Sigmoid colon (tissue), 7 donors: ENCODE measurements at regions of chr9 and their contacts with region 1.

Region 1: DNA sequence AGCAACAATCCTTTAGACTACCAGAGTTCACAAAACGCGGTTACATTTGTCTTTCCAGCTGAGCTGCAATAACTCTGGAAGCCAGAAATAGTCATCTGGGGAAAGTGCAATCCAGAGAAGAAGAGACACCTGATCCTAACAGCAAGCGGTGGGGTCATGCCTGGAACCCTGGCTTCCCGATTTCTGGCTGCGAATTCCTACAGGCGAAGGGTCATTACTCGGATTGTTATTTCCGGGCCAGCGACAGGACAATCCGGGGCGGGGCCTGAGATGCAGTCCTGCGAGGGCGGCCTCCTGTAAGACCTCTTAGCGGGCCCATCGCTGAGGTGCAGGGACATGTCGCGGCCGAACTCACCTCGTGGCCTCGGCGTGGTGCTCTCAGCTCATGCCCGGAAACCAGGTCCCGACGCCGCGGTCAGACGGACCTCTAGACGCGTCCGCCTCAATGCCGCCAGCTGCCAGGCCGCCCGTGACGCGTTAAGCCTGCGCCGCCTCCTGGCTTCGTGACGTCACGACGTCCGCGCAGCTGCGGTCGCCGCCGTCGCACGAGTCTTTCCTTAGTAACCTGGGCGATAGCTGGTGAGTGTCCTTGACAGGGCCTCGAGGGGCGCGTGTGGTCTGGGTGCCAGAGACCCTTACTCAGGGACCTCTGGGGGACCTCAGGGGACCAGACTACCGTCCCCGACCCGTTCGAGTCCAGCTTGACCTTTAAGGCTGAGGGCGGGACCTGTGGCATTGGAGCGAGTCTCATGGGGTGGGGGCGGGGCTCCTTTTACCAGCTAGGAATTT is at the starts of genes MRRF and RBM18:
- DNase-seq: peak; percentile 95
- H3K4me3 ChIP-seq: peak within 1 kb of the TSS; percentile 56 to 84 (median 70)
- H3K27ac ChIP-seq: peak within 1 kb of the TSS; percentile 86 to 93 (median 92)
- H3K4me1 ChIP-seq: peaks cover 0 to 42% (median 39%) of the 10 kb centered on the region in 4 donors
- H3K27me3 ChIP-seq: no peaks in the 10 kb centered on the region
- CTCF ChIP-seq: no peak
- EP300 ChIP-seq: peak in 1 of 4 donors; percentile 16
- POLR2A ChIP-seq: peak in 1 of 2 donors; percentile 63
- total RNA-seq, gene MRRF: 29.9 to 40.7 (median 33.9) TPM
- total RNA-seq, gene RBM18: 11.9 to 16.8 (median 13.0) TPM

Region 2: GRCh38 chr9:122159026-122159924 is 105.3 kb before region 1 on chr9 and contains the starts of genes MORN5 and NDUFA8:
- intact Hi-C with region 1: loop called (anchors 2 kb)
- DNase-seq: peak; percentile 98
- H3K4me3 ChIP-seq: peak within 1 kb of the TSS; percentile 87 to 98 (median 92)
- H3K27ac ChIP-seq: peak within 1 kb of the TSS; percentile 89 to 94 (median 92)
- H3K4me1 ChIP-seq: peaks cover 0 to 62% (median 49%) of the 10 kb centered on the region in 4 donors
- H3K27me3 ChIP-seq: no peaks in the 10 kb centered on the region
- CTCF ChIP-seq: peak; percentile 12 to 29 (median 24)
- EP300 ChIP-seq: no peak
- POLR2A ChIP-seq: peak; percentile 87 to 88
- total RNA-seq, gene MORN5: 26.5 to 45.7 (median 34.2) TPM
- total RNA-seq, gene NDUFA8: 63.9 to 106 (median 88.8) TPM

Region 3: GRCh38 chr9:122213589-122214413 is 50.8 kb before region 1 on chr9:
- intact Hi-C with region 1: no loop called
- DNase-seq: peak; percentile 47
- H3K4me3 ChIP-seq: peak overlapping the region in 3 of 4 donors; percentile 31 to 39 (median 36)
- H3K27ac ChIP-seq: no peak overlapping the region
- H3K4me1 ChIP-seq: peaks cover 0 to 19% (median 18%) of the 10 kb centered on the region in 4 donors
- H3K27me3 ChIP-seq: peaks cover 35 to 80% (median 58%) of the 10 kb centered on the region in 3 donors
- CTCF ChIP-seq: no peak
- EP300 ChIP-seq: no peak
- POLR2A ChIP-seq: no peak

Region 4: DNA sequence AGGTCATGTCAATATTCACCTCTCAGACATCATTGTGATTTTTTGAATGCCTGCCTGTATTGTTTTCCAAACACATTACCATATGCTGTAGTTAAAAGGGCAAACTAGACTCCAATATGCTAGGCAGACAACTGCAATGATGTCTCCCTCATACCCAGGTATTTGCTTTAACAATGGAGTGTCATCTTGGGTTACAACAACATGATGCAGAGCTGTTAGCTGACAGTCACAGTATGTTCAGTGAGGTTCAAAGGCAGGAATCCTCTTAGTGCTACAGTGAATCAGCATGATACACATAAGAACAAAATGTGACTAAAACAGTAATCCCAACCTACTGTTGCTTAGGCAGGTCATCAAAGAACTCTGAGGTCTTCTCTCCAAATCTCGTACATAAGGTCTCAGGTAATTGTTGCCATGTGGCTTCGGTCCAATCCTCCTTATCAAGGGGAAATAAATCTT is 189.2 kb after region 1 on chr9:
- intact Hi-C with region 1: loop called (anchors 2 kb)
- DNase-seq: no peak
- H3K4me3 ChIP-seq: no peak overlapping the region
- H3K27ac ChIP-seq: no peak overlapping the region
- H3K4me1 ChIP-seq: peaks cover 0 to 22% (median 7%) of the 10 kb centered on the region in 4 donors
- H3K27me3 ChIP-seq: no peaks in the 10 kb centered on the region
- CTCF ChIP-seq: no peak
- EP300 ChIP-seq: no peak
- POLR2A ChIP-seq: no peak